Activated T-helper 1 cell treated with anti-CD3 and anti-CD28 coated beads, Interleukin-12 subunit alpha, Interleukin-12 subunit beta, Interleukin-2, Interleukin-4 antibody, amounts not matched to agents 30 ng/mL and 10 ng/mL and 1 ng/mL, durations not matched to agents 14 hours and 24 hours and 36 hours (primary cell): ENCODE measurements at regions of chr13 and their contacts with region 1.

Region 1: GRCh38 chr13:48233046-48233907 is at the start of gene ITM2B:
- DNase-seq: peak; percentile 49
- H3K4me3 Mint-ChIP-seq: peak within 1 kb of the TSS; percentile 92
- H3K27ac Mint-ChIP-seq: peak within 1 kb of the TSS; percentile 80
- H3K4me1 Mint-ChIP-seq: peaks cover 50% of the 10 kb centered on the region
- H3K27me3 Mint-ChIP-seq: peaks cover 26% of the 10 kb centered on the region
- total RNA-seq, gene ITM2B: 56.2 and 61.2 TPM in 2 replicates

Region 2: GRCh38 chr13:48126944-48127830 is 106.1 kb before region 1 on chr13:
- intact Hi-C with region 1: loop called (anchors 1 kb)
- DNase-seq: peak; percentile 8
- H3K4me3 Mint-ChIP-seq: no peak overlapping the region
- H3K27ac Mint-ChIP-seq: no peak overlapping the region
- H3K4me1 Mint-ChIP-seq: peaks cover 11% of the 10 kb centered on the region
- H3K27me3 Mint-ChIP-seq: peaks cover 7% of the 10 kb centered on the region

Region 3: GRCh38 chr13:48162217-48162616 is 71.1 kb before region 1 on chr13:
- intact Hi-C with region 1: no loop called
- DNase-seq: no peak
- H3K4me3 Mint-ChIP-seq: no peak overlapping the region
- H3K27ac Mint-ChIP-seq: no peak overlapping the region
- H3K4me1 Mint-ChIP-seq: peaks cover 34% of the 10 kb centered on the region
- H3K27me3 Mint-ChIP-seq: peaks cover 7% of the 10 kb centered on the region

Region 4: DNA sequence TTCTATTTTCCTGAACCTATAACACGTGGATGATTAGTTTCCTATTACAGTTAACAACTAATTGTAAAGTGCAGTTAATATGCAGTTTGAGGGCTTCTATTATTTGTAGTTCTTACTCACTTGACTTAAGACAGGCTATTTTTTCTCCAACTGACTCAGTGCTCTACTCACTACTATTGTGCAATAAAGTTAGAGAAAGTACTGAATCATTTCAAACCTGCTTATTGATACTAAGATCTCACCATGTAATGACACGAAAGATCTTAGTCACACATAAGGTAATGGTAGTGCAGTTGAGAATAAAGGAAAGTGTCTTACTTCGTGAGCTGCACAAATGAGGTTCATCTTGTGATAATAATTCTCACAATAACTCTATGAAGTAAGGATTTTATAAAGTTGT is 23.1 kb before region 1 on chr13:
- intact Hi-C with region 1: loop called (anchors 1 kb)
- DNase-seq: no peak
- H3K4me3 Mint-ChIP-seq: no peak overlapping the region
- H3K27ac Mint-ChIP-seq: no peak overlapping the region
- H3K4me1 Mint-ChIP-seq: peaks cover 10% of the 10 kb centered on the region
- H3K27me3 Mint-ChIP-seq: peaks cover 49% of the 10 kb centered on the region

Region 5: GRCh38 chr13:48303359-48304142 is 70.3 kb after region 1 on chr13 and contains the start of gene RB1:
- intact Hi-C with region 1: loop called (anchors 1 kb)
- DNase-seq: peak; percentile 88
- H3K4me3 Mint-ChIP-seq: peak within 1 kb of the TSS; percentile 99
- H3K27ac Mint-ChIP-seq: peak within 1 kb of the TSS; percentile 97
- H3K4me1 Mint-ChIP-seq: peaks cover 30% of the 10 kb centered on the region
- H3K27me3 Mint-ChIP-seq: no peaks in the 10 kb centered on the region
- total RNA-seq, gene RB1: 26.5 and 28.6 TPM in 2 replicates

Region 6: DNA sequence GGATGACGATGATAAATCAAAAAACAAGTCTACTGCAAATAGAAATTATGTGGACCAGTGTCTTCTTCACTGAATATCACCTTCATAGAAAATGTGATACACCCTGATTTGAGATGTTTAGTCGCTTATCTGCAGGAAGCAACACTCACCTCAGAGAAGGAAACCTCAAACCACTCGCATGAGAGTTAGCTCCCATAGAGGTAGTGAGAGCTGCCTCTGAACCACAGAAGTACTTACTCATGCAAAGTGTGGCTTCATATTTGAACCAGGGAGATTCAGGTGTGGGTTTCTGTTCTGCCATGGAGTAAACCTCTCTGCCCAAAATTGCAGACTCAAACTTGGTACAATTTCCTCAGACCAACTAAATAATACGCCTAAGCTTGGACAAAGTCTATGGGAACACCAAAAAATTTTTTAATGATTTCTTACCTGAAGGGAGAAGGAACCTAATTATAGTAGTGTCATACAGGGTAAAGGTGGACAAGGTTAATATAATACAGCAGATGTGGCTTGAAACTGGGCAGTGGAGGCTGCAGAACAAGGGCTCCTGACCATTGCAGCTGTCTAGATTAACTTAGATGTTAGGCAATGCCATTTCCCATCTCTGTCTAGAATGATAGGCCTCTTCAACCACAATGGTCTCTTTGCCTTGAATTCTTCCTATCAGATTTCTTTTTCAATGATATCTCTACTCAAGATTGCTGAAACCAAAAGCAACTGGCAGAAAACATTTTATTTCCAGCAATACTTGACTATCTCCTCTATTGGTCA is 329.2 kb after region 1 on chr13:
- intact Hi-C with region 1: loop called (anchors 1 kb)
- DNase-seq: peak; percentile 77
- H3K4me3 Mint-ChIP-seq: no peak overlapping the region
- H3K27ac Mint-ChIP-seq: no peak overlapping the region
- H3K4me1 Mint-ChIP-seq: peaks cover 59% of the 10 kb centered on the region
- H3K27me3 Mint-ChIP-seq: peaks cover 68% of the 10 kb centered on the region

Region 7: DNA sequence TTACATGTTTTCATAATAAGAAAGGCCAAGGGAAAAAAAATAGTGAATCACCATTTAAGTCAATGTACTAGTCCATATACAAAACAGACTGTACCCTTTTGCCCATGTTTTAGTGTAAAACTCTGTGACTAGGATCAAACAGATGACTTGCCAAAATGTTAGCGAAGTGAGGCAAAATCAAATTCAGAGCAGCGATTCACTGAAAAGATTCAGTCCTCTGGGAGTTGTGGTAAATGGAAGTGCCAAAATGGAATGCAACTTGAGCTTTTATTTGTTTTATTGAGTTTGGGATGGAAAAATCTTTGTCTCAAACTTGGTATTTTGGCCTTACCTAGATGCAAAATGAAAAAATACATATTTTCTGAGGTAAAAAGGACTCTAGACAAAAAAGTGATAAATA is 1023.6 kb after region 1 on chr13:
- intact Hi-C with region 1: no loop called
- DNase-seq: no peak
- H3K4me3 Mint-ChIP-seq: peak overlapping the region; percentile 42
- H3K27ac Mint-ChIP-seq: no peak overlapping the region
- H3K4me1 Mint-ChIP-seq: peaks cover 53% of the 10 kb centered on the region
- H3K27me3 Mint-ChIP-seq: no peaks in the 10 kb centered on the region